ENCODE measurements at regions of chr11 and their contacts with region 1.

Region 1: DNA sequence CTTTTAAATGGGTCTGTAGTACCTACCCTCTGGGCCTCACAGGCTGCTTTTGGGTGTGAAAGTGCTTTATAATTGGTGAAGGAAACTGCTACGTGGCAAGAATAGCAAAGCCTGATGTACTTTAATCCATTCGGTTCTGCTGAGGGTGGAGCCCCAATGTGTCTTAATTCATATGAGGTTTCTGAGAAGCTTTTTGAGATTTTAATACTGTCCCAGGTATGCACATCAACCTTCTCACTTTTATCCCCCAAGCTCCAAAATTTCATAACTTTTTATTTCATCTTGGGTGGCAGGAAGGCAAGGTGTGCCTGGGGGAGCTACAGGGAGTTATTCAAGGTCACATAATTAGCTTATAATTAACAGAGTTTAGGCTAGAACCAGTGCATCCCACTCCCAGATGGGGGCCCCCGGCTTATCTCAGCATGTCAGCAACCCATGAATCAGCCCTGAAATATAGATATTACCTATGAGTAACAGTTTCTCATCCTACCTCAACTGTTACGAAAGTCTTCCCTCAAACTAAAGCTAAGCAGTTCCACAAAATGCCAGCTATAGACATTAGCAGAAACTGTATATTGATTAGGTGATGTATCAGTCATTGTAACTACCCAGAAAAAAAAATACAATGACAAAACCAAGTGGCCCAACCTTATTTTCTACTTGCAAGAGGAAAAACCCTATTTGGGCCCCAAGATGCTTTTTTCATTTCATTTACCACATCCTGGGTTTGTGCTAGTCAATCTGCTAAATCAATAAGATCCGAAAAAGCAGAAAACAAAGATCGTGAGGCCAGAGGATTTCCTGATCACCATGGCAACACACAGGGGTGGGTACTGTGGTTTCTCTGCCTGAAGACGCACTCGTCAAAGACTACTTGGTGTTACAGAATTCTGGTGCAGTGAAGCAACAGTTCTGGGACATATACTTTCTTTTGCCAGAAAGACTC is 26.7 kb downstream of the CD44 start:
- DNase-seq: peak; percentile 95
- H3K4me3 Mint-ChIP-seq: peak overlapping the region; percentile 55
- H3K27ac Mint-ChIP-seq: peak overlapping the region; percentile 94
- H3K4me1 Mint-ChIP-seq: peaks cover 97% of the 10 kb centered on the region
- H3K27me3 Mint-ChIP-seq: no peaks in the 10 kb centered on the region

Region 2: GRCh38 chr11:35040221-35040942 is 125.3 kb before region 1 on chr11:
- CTCF ChIA-PET with region 1: interaction called, 3 read pairs
- POLR2A ChIA-PET with region 1: interaction called, 16 read pairs
- DNase-seq: peak; percentile 74
- H3K4me3 Mint-ChIP-seq: peak overlapping the region; percentile 82
- H3K27ac Mint-ChIP-seq: peak overlapping the region; percentile 99
- H3K4me1 Mint-ChIP-seq: peaks cover 75% of the 10 kb centered on the region
- H3K27me3 Mint-ChIP-seq: peaks cover 13% of the 10 kb centered on the region

Region 3: GRCh38 chr11:35082321-35083182 is 83.1 kb before region 1 on chr11:
- CTCF ChIA-PET with region 1: interaction called, 5 read pairs
- POLR2A ChIA-PET with region 1: interaction called, 13 read pairs
- DNase-seq: peak; percentile 92
- H3K4me3 Mint-ChIP-seq: peak overlapping the region; percentile 77
- H3K27ac Mint-ChIP-seq: peak overlapping the region; percentile 91
- H3K4me1 Mint-ChIP-seq: peaks cover 84% of the 10 kb centered on the region
- H3K27me3 Mint-ChIP-seq: no peaks in the 10 kb centered on the region

Region 4: GRCh38 chr11:35151241-35151640 is 14.5 kb before region 1 on chr11:
- CTCF ChIA-PET with region 1: interaction called, 62 read pairs
- POLR2A ChIA-PET with region 1: interaction called, 634 read pairs
- DNase-seq: no peak
- H3K4me3 Mint-ChIP-seq: no peak overlapping the region
- H3K27ac Mint-ChIP-seq: peak overlapping the region; percentile 41
- H3K4me1 Mint-ChIP-seq: peaks cover 93% of the 10 kb centered on the region
- H3K27me3 Mint-ChIP-seq: no peaks in the 10 kb centered on the region

Region 5: DNA sequence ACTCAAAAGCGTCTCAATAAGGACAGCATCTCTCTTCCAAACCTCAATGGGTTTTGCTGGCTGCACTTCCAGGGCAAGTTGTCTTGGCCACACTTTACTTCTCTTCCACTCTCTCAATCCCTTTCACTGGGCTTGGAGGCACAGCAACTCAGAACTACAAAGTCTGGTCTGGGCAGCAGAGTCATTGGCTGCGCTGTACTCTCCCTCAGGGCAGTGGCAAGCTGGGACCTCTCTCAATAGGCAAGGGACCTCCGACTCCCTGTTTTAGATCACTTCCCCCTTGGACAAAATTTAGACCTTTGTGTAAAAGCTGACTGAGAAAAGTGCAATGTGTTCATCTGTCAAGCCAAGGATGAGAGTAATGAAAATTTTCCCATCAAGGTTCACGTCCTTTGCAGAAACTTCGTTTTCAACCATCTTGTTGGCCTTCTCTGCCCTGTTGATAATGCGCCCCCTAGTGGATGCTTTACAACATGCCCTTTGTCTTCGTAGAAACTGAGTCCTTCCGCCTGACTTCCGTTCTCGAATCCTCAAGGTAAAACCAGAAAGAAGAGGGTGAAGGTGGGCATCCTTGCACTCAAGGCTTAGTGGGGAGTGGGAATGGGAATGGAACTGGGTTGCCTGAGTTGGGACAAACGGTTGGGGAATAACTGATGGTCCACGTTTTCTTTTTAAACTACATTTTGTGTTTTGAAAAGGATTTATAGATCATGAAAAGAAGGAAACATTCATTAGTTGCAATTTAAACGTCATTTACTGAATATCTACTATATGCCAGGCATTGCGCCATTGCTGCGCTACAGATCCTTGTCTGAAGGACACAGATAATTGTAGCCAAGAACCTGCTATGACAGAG is 72.4 kb after region 1 on chr11:
- CTCF ChIA-PET with region 1: interaction called, 17 read pairs
- POLR2A ChIA-PET with region 1: interaction called, 11 read pairs
- DNase-seq: peak; percentile 59
- H3K4me3 Mint-ChIP-seq: no peak overlapping the region
- H3K27ac Mint-ChIP-seq: peak overlapping the region; percentile 36
- H3K4me1 Mint-ChIP-seq: peaks cover 81% of the 10 kb centered on the region
- H3K27me3 Mint-ChIP-seq: peaks cover 2% of the 10 kb centered on the region

Measured in activated CD4-positive, alpha-beta memory T cell treated with anti-CD3 and anti-CD28 coated beads, Interleukin-2, amount 10 ng/mL, durations not matched to agents 7 days and 5 days (primary cell).